ENCODE measurements at regions of chr14 and their contacts with region 1.

Region 1: GRCh38 chr14:90266441-90267154 is 10.2 kb downstream of the PSMC1 start:
- DNase-seq: no peak
- H3K4me3 ChIP-seq: no peak overlapping the region
- H3K27ac ChIP-seq: no peak overlapping the region
- H3K4me1 ChIP-seq: no peaks in the 10 kb centered on the region
- H3K27me3 ChIP-seq: no peaks in the 10 kb centered on the region
- CTCF ChIP-seq: no peak
- EP300 ChIP-seq: no peak
- POLR2A ChIP-seq: no peak
- RAD21 ChIP-seq: no peak

Region 2: DNA sequence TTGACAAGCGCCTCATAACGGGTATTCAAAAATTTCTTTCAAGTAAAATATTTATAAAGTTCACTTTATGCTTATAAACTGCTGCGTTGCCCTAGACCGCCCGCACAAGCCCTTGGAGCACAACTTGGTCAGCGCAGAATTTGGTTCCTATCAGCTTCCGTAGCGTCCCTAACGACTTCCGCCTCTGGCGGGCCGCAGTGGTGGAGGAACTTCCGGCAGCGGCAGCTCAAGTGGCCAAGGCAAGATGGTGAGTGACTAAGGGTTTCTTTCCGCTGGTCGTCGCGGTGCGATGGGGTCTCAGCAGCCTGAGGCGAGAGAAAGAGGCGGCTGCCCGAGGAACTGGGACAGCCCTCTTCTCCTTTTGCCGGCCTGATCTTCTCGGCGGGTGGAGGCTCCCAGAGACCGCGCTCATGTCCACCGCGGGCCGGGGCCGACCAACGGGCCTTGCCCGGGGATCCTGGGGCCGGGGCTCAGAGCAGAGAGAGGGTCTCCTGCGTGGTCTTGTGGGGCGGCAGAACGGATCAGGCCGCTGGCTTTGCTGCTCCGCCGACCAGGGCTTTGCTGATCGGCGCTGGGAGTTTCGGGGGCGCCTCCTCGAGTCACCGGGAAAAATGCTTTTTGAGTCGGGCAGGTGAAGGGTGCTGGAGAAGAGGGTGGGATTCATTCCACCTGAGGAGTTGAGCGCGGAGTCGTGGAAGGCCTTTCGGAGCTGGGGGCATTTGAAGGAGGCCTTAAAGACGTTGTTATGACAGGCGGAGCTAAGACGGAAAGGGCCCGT is 10.1 kb before region 1 on chr14 and contains the start of gene PSMC1:
- CTCF ChIA-PET with region 1: interaction called, 3 read pairs
- POLR2A ChIA-PET with region 1: interaction called, 22 read pairs
- DNase-seq: peak; percentile 71 to 78
- H3K4me3 ChIP-seq: peak within 1 kb of the TSS; percentile 62 to 94 (median 78)
- H3K27ac ChIP-seq: peak within 1 kb of the TSS; percentile 75; the same call in 1 of the 2 replicates
- H3K4me1 ChIP-seq: peaks cover 0 to 3% (median 0%) of the 10 kb centered on the region in 4 experiments; a peak in 1 of 7 replicates
- H3K27me3 ChIP-seq: peaks cover 0 to 6% (median 3%) of the 10 kb centered on the region in 4 experiments; a peak in 4 of 7 replicates
- CTCF ChIP-seq: no peak
- EP300 ChIP-seq: peak in 1 of 2 experiments; percentile 24; a peak in 1 of 3 replicates
- POLR2A ChIP-seq: peak; percentile 82 to 91
- RAD21 ChIP-seq: no peak; a peak in 1 of 4 replicates
- total RNA-seq, gene PSMC1: 99.6 and 104 TPM in 2 replicates

Region 3: GRCh38 chr14:90475298-90475697 is 208.7 kb after region 1 on chr14:
- CTCF ChIA-PET with region 1: no interaction called
- POLR2A ChIA-PET with region 1: no interaction called
- DNase-seq: no peak
- H3K4me3 ChIP-seq: no peak overlapping the region
- H3K27ac ChIP-seq: no peak overlapping the region
- H3K4me1 ChIP-seq: no peaks in the 10 kb centered on the region
- H3K27me3 ChIP-seq: no peaks in the 10 kb centered on the region
- CTCF ChIP-seq: no peak
- EP300 ChIP-seq: no peak
- POLR2A ChIP-seq: no peak
- RAD21 ChIP-seq: no peak

Measured in H1 (cell line).